ENCODE measurements at regions of chr1 and their contacts with region 1.

Region 1: GRCh38 chr1:110370827-110371226 is 20.0 kb downstream of the SLC16A4 start:
- DNase-seq: no peak
- H3K4me3 ChIP-seq: no peak overlapping the region
- H3K27ac ChIP-seq: no peak overlapping the region
- H3K4me1 ChIP-seq: no peaks in the 10 kb centered on the region
- H3K27me3 ChIP-seq: no peaks in the 10 kb centered on the region
- CTCF ChIP-seq: no peak
- EP300 ChIP-seq: no peak
- POLR2A ChIP-seq: no peak
- RAD21 ChIP-seq: no peak

Region 2: GRCh38 chr1:110384581-110385321 is 13.9 kb after region 1 on chr1:
- CTCF ChIA-PET with region 1: interaction called, 3 read pairs
- POLR2A ChIA-PET with region 1: interaction called, 14 read pairs
- DNase-seq: no peak
- H3K4me3 ChIP-seq: no peak overlapping the region
- H3K27ac ChIP-seq: no peak overlapping the region
- H3K4me1 ChIP-seq: no peaks in the 10 kb centered on the region
- H3K27me3 ChIP-seq: no peaks in the 10 kb centered on the region
- CTCF ChIP-seq: no peak
- EP300 ChIP-seq: no peak
- POLR2A ChIP-seq: no peak
- RAD21 ChIP-seq: no peak

Region 3: GRCh38 chr1:110455151-110455550 is 84.3 kb after region 1 on chr1:
- CTCF ChIA-PET with region 1: interaction called, 12 read pairs
- POLR2A ChIA-PET with region 1: no interaction called
- DNase-seq: peak in 1 of 2 experiments; percentile 73
- H3K4me3 ChIP-seq: no peak overlapping the region
- H3K27ac ChIP-seq: no peak overlapping the region
- H3K4me1 ChIP-seq: peaks cover 0 to 3% (median 2%) of the 10 kb centered on the region in 4 experiments; a peak in 4 of 7 replicates
- H3K27me3 ChIP-seq: no peaks in the 10 kb centered on the region
- CTCF ChIP-seq: peak; percentile 80 to 91 (median 84)
- EP300 ChIP-seq: no peak
- POLR2A ChIP-seq: no peak
- RAD21 ChIP-seq: peak; percentile 96 to 98

Measured in H1 (cell line).